ENCODE measurements at regions of chr2 and their contacts with region 1.

Region 1: GRCh38 chr2:141778315-141778835 is 352.4 kb downstream of the LRP1B start:
- DNase-seq: no peak
- ATAC-seq: no peak
- H3K4me3 ChIP-seq: no peak overlapping the region
- H3K27ac ChIP-seq: no peak overlapping the region
- H3K4me1 ChIP-seq: no peaks in the 10 kb centered on the region
- H3K27me3 ChIP-seq: no peaks in the 10 kb centered on the region
- CTCF ChIP-seq: no peak

Region 2: DNA sequence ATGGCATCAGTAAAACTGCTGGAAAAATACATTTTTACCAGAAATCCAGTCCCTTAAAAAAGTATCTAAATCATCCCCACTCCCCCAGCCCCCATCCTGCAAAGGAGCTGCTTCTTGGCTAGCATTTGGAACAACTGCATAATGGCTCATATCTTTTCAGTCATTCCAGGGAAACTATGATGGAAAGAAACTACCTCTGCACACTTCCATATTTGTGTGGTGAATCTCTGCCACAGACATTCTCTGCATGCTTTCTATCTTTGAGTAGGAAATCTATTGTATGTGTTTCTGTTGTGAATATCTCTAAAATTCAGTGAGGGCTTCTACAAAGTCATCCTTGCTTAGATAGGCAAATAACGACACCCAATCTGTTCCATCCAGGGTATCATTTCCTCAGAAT is 279.8 kb before region 1 on chr2:
- CTCF ChIA-PET with region 1: no interaction called
- POLR2A ChIA-PET with region 1: no interaction called
- in situ Hi-C with region 1: no loop called
- intact Hi-C with region 1: no loop called
- DNase-seq: no peak
- ATAC-seq: no peak
- H3K4me3 ChIP-seq: no peak overlapping the region
- H3K27ac ChIP-seq: no peak overlapping the region
- H3K4me1 ChIP-seq: no peaks in the 10 kb centered on the region
- H3K27me3 ChIP-seq: no peaks in the 10 kb centered on the region
- CTCF ChIP-seq: no peak

Region 3: GRCh38 chr2:142128105-142128504 is 349.7 kb after region 1 on chr2:
- CTCF ChIA-PET with region 1: no interaction called
- POLR2A ChIA-PET with region 1: interaction called, 11 read pairs
- in situ Hi-C with region 1: no loop called
- intact Hi-C with region 1: no loop called
- DNase-seq: no peak
- ATAC-seq: no peak
- H3K4me3 ChIP-seq: no peak overlapping the region
- H3K27ac ChIP-seq: no peak overlapping the region
- H3K4me1 ChIP-seq: peaks cover 4% of the 10 kb centered on the region; the same call in 1 of the 2 replicates
- H3K27me3 ChIP-seq: peaks cover 8% of the 10 kb centered on the region
- CTCF ChIP-seq: no peak